ENCODE measurements at regions of chr1 and their contacts with region 1.

Region 1: DNA sequence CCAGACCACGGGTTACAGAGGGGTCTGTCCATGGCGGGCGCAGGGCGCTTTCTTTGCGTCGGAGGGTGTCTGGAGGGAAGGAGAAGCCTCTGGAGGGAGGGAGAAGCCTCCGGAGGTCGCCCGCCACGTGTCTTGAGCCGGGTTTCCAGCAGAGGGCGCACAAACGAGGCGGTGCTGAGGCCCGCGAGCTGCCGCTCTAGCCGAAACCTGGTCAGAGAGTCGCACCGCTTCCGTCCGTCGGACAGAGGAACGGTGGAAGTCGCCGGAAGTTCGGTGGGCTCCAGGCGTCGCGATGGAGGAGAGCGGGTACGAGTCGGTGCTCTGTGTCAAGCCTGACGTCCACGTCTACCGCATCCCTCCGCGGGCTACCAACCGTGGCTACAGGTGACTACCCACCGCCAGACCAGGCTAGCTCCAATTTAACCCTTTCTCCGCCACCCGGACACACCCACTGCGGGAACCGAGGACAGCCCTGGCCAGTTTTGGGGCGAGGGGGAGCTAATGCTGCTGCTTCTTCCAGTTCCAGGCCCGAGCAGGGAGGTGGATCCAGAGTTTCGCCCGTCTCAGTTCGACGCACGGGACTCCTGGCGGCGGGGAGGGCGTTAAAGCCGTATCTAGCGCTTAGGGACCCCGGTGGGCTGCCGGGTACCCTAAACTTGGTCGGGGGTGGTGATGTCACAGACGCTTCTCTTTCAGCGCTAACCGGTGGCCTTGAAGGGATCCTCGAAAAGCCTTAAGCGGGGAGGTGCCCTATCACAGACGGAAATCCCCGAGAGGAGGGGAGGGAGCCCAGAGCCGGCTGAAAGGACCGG is at the start of gene NECAP2:
- DNase-seq: peak; percentile 96
- H3K4me3 Mint-ChIP-seq: peak within 1 kb of the TSS; percentile 87
- H3K27ac Mint-ChIP-seq: peak within 1 kb of the TSS; percentile 86
- H3K4me1 Mint-ChIP-seq: peaks cover 37% of the 10 kb centered on the region
- H3K27me3 Mint-ChIP-seq: no peaks in the 10 kb centered on the region
- total RNA-seq, gene NECAP2: 76.4 to 82.0 TPM

Region 2: GRCh38 chr1:16351994-16352841 is 88.5 kb before region 1 on chr1 and contains the start of gene FBXO42:
- CTCF ChIA-PET with region 1: interaction called, 9 read pairs
- POLR2A ChIA-PET with region 1: interaction called, 8 read pairs
- intact Hi-C with region 1: loop called (anchors 5 kb)
- DNase-seq: peak; percentile 95
- H3K4me3 Mint-ChIP-seq: peak within 1 kb of the TSS; percentile 88
- H3K27ac Mint-ChIP-seq: peak within 1 kb of the TSS; percentile 91
- H3K4me1 Mint-ChIP-seq: peaks cover 27% of the 10 kb centered on the region
- H3K27me3 Mint-ChIP-seq: no peaks in the 10 kb centered on the region
- total RNA-seq, gene FBXO42: 12.0 to 13.6 TPM

Region 3: DNA sequence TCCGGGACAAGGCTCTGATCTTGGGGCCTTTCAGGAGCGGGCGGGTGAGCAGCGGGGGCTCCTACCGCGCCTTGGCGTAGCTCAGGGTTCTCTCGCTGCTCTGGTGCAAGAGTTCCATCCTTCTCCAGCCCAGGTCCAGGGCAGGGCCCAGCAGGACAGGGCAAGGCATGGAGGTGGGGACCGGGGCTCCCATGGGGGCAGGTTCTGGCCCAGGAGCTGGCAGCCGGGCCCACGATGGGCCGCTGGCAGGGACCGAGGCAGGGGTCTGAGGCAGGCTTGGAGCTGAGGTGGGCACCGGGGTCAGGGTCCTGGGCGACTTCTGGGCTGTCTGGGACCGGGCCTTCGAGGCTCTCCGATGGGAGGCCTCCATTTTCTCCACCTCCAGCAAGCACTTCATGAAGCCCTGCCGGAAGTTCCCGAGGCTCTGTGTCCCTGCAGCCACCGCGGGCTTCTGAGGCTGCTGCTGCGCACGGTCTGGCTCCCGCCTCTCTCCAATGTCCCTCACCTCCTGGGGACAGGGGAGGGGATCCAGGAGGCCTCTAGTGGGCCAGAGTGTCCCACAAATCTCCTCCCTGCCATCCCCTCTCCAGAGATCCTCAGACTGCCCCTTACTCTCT is 31.0 kb before region 1 on chr1:
- CTCF ChIA-PET with region 1: no interaction called
- POLR2A ChIA-PET with region 1: no interaction called
- intact Hi-C with region 1: no loop called
- DNase-seq: no peak
- H3K4me3 Mint-ChIP-seq: no peak overlapping the region
- H3K27ac Mint-ChIP-seq: no peak overlapping the region
- H3K4me1 Mint-ChIP-seq: no peaks in the 10 kb centered on the region
- H3K27me3 Mint-ChIP-seq: no peaks in the 10 kb centered on the region

Region 4: GRCh38 chr1:16420424-16421118 is 20.1 kb before region 1 on chr1:
- CTCF ChIA-PET with region 1: interaction called, 17 read pairs
- POLR2A ChIA-PET with region 1: interaction called, 3 read pairs
- intact Hi-C with region 1: loop called (anchors 1 kb)
- DNase-seq: peak; percentile 91
- H3K4me3 Mint-ChIP-seq: peak overlapping the region; percentile 17
- H3K27ac Mint-ChIP-seq: peak overlapping the region; percentile 72
- H3K4me1 Mint-ChIP-seq: peaks cover 32% of the 10 kb centered on the region
- H3K27me3 Mint-ChIP-seq: no peaks in the 10 kb centered on the region

Region 5: GRCh38 chr1:16451841-16452528 is 11.3 kb after region 1 on chr1:
- CTCF ChIA-PET with region 1: interaction called, 14 read pairs
- POLR2A ChIA-PET with region 1: interaction called, 4 read pairs
- intact Hi-C with region 1: no loop called
- DNase-seq: no peak
- H3K4me3 Mint-ChIP-seq: no peak overlapping the region
- H3K27ac Mint-ChIP-seq: peak overlapping the region; percentile 10
- H3K4me1 Mint-ChIP-seq: peaks cover 36% of the 10 kb centered on the region
- H3K27me3 Mint-ChIP-seq: no peaks in the 10 kb centered on the region

Region 6: GRCh38 chr1:16498573-16499413 is 58.1 kb after region 1 on chr1:
- CTCF ChIA-PET with region 1: no interaction called
- POLR2A ChIA-PET with region 1: no interaction called
- intact Hi-C with region 1: loop called (anchors 5 kb)
- DNase-seq: peak; percentile 89
- H3K4me3 Mint-ChIP-seq: peak overlapping the region; percentile 78
- H3K27ac Mint-ChIP-seq: no peak overlapping the region
- H3K4me1 Mint-ChIP-seq: peaks cover 19% of the 10 kb centered on the region
- H3K27me3 Mint-ChIP-seq: no peaks in the 10 kb centered on the region

Measured in activated CD4-positive, alpha-beta memory T cell treated with anti-CD3 and anti-CD28 coated beads for 36 hours (primary cell).